GM13977 (cell line): ENCODE measurements at regions of chr9 and their contacts with region 1.

Region 1: DNA sequence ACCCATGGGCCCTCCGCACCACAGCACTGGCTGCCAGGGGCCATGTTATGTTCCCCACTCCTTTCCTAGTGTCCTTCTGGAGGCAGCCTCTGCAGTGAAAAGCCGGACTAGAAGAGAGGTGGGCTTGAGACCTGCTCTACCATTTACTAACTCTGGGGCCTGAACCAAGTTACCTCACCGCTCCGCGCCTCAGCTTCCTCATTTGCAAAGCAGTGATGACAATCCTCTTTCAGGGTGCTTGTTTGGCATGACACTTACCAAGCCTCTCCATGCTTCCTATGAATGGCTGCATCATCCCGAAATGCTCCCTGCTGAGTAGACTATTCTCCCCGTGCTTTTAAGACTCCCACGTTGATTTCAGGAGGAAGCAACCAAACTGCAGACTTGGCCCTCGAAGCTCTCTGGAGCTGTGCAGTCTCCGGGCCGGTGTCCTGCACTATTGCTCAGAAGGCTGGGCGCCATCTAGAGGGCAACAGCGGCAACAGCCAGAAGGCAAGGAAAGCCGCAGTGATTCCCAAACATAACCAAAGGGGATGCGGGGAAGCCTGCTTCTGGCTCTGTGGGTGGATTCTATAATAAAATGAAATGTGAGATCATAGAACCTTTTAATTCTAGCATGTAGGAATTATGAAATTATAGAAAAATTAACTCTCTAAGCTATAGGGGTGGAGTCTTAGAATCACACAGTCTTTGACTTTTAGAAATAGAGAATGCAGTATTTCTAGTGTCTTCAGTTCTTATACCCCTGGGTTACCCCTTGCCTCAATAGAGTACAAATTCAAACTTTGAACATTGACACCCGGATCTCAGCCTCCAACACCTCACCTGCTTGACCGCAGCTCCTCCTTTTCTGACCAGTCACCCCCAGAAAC is 599.8 kb upstream of the BRINP1 start:
- DNase-seq: peak; percentile 70
- CTCF ChIP-seq: peak; percentile 98

Region 2: GRCh38 chr9:119556129-119556875 is 412.8 kb before region 1 on chr9:
- in situ Hi-C with region 1: loop called (anchors 25 kb)
- DNase-seq: peak; percentile 67
- CTCF ChIP-seq: peak; percentile 96

Region 3: DNA sequence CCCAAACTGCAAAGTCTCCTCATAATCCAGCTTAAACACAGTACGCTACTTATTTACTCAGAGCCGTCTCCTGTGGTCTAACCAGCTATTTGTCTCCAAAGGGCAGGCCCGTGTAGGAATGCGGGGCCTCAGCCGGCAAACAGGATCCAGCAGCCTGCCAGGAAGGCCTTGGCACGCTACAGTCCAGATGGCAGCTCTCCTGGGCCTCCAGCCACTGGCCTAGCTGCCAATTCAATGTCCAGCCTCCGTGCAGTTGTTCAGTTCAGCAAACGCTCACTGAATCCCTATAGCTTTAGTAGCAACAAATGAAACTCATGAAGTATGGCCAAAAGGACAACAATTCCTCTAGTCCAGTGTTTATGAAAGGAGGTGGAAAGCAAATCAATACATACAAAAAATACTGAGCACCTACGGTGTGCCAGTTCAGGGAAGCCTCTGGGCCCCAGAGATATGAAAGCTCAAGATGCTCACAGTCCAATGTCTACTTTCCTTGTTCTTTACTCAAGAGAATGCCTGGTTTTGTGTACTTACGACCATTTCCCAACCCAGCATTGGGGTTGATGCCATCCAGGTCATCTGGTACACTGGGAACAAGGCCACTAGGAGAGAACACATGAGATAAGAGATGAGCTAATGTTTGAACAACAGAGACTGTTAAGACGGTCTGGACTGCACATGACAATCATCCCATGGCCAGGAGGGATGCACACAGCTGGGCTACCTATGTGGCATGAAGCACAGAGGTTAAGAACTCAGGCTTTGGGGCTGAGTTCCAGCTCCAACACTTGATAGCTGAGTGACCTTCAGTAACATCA is 602.6 kb after region 1 on chr9:
- in situ Hi-C with region 1: no loop called
- DNase-seq: no peak
- CTCF ChIP-seq: no peak